Esophagus muscularis mucosa (tissue), 4 donors: ENCODE measurements at regions of chr18 and their contacts with region 1.

Region 1: GRCh38 chr18:34600118-34600517 is 110.0 kb upstream of the DTNA start:
- DNase-seq: no peak
- H3K4me3 ChIP-seq: no peak overlapping the region
- H3K27ac ChIP-seq: peak overlapping the region in 1 of 4 donors; percentile 40
- H3K4me1 ChIP-seq: peaks cover 4 to 75% (median 48%) of the 10 kb centered on the region in 4 donors
- H3K27me3 ChIP-seq: no peaks in the 10 kb centered on the region
- CTCF ChIP-seq: no peak
- EP300 ChIP-seq: no peak
- POLR2A ChIP-seq: no peak

Region 2: GRCh38 chr18:34643989-34644388 is 43.9 kb after region 1 on chr18:
- intact Hi-C with region 1: loop called (anchors 5 kb)
- DNase-seq: no peak
- H3K4me3 ChIP-seq: peak overlapping the region in 2 of 4 donors; percentile 1 to 6
- H3K27ac ChIP-seq: peak overlapping the region; percentile 22 to 63 (median 55)
- H3K4me1 ChIP-seq: peaks cover 13 to 67% (median 50%) of the 10 kb centered on the region in 4 donors
- H3K27me3 ChIP-seq: no peaks in the 10 kb centered on the region
- CTCF ChIP-seq: peak; percentile 23 to 45 (median 42)
- EP300 ChIP-seq: no peak
- POLR2A ChIP-seq: no peak

Region 3: DNA sequence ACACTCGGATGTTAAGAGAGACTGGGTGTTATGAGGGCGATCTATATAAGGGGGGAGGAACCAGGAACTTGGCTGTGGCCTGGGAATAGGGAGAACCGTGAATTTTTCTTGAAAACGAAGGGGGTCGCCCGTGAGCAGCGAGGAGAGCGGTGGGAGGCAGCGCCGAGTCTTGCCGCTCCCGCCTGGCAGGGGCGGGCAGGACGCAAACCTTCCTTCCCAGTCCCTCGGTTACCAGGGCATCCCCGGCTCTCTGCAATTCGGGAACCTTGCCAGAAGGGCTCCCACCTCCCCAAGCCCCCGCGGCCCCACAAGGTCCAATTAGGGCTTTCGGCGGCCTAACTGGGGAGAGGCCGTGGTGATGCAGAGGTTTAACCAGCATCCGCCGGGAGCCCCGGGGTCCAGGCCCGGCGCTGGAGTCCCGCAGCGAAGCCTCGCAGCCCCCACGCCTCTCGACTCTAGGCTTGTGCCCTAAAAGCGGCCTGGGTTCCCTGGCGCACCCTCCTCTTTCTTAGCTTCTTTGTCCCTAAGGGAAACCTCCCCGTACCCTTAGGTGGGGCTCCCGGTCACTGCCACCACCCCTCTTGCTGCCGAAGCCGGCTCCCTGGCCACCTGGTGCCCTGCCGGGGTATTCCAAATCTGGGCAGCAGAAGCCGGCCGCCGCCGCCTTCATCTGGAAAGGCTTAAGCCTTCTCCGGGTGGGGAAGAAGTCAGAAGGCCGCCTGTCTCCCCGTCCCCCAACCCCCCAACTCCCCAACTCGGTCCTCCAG is 1696.7 kb after region 1 on chr18:
- intact Hi-C with region 1: no loop called
- DNase-seq: peak; percentile 91
- H3K4me3 ChIP-seq: peak overlapping the region; percentile 70 to 84 (median 80)
- H3K27ac ChIP-seq: peak overlapping the region; percentile 78 to 87 (median 82)
- H3K4me1 ChIP-seq: peaks cover 13 to 37% (median 27%) of the 10 kb centered on the region in 4 donors
- H3K27me3 ChIP-seq: peaks cover 0 to 10% (median 5%) of the 10 kb centered on the region in 4 donors
- CTCF ChIP-seq: peak; percentile 17 to 29 (median 22)
- EP300 ChIP-seq: no peak
- POLR2A ChIP-seq: no peak